Panc1 (cell line): ENCODE measurements at regions of chr12 and their contacts with region 1.

Region 1: GRCh38 chr12:52774629-52775250 is 2.4 kb downstream of the KRT76 start:
- DNase-seq: no peak
- ATAC-seq: no peak
- H3K4me3 ChIP-seq: no peak overlapping the region
- H3K27ac ChIP-seq: no peak overlapping the region
- H3K4me1 ChIP-seq: no peaks in the 10 kb centered on the region
- H3K27me3 ChIP-seq: peaks cover 8% of the 10 kb centered on the region; the same call in 1 of the 2 replicates
- CTCF ChIP-seq: no peak

Region 2: DNA sequence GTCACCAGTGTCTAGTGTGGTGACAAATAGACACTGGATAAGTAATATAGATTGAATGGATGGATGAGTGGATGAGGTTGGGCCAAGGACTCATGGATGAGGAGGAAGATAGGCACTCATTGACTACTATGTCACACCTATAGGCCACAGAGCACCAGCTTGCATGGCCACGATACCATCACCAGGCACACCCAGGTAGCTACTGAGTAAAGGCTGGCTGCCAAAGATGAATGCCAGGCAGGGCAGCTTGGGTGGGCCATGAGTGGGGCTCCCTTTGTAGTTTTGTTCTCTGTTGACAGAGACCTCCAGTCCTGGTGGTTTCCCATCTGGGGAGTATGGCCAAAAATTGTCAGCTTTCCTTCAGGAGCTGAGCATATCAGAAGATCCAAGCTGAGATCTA is 442.4 kb before region 1 on chr12:
- CTCF ChIA-PET with region 1: no interaction called
- POLR2A ChIA-PET with region 1: interaction called, 11 read pairs
- in situ Hi-C with region 1: no loop called
- intact Hi-C with region 1: no loop called
- DNase-seq: no peak
- ATAC-seq: no peak
- H3K4me3 ChIP-seq: no peak overlapping the region
- H3K27ac ChIP-seq: no peak overlapping the region
- H3K4me1 ChIP-seq: peaks cover under 1% of the 10 kb centered on the region; the same call in 1 of the 2 replicates
- H3K27me3 ChIP-seq: no peaks in the 10 kb centered on the region
- CTCF ChIP-seq: no peak

Region 3: GRCh38 chr12:52847335-52848102 is 72.8 kb after region 1 on chr12:
- CTCF ChIA-PET with region 1: no interaction called
- POLR2A ChIA-PET with region 1: no interaction called
- in situ Hi-C with region 1: no loop called
- intact Hi-C with region 1: no loop called
- DNase-seq: no peak
- ATAC-seq: 0 out of 2 replicates have a peak, but pooled peaks have one; percentile 26
- H3K4me3 ChIP-seq: no peak overlapping the region
- H3K27ac ChIP-seq: no peak overlapping the region
- H3K4me1 ChIP-seq: no peaks in the 10 kb centered on the region
- H3K27me3 ChIP-seq: no peaks in the 10 kb centered on the region
- CTCF ChIP-seq: no peak

Region 4: GRCh38 chr12:52942066-52942900 is 167.5 kb after region 1 on chr12:
- CTCF ChIA-PET with region 1: no interaction called
- POLR2A ChIA-PET with region 1: no interaction called
- in situ Hi-C with region 1: no loop called
- intact Hi-C with region 1: no loop called
- DNase-seq: no peak
- ATAC-seq: no peak
- H3K4me3 ChIP-seq: no peak overlapping the region
- H3K27ac ChIP-seq: peak overlapping the region; percentile 98
- H3K4me1 ChIP-seq: peaks cover 44% of the 10 kb centered on the region
- H3K27me3 ChIP-seq: no peaks in the 10 kb centered on the region
- CTCF ChIP-seq: no peak

Region 5: DNA sequence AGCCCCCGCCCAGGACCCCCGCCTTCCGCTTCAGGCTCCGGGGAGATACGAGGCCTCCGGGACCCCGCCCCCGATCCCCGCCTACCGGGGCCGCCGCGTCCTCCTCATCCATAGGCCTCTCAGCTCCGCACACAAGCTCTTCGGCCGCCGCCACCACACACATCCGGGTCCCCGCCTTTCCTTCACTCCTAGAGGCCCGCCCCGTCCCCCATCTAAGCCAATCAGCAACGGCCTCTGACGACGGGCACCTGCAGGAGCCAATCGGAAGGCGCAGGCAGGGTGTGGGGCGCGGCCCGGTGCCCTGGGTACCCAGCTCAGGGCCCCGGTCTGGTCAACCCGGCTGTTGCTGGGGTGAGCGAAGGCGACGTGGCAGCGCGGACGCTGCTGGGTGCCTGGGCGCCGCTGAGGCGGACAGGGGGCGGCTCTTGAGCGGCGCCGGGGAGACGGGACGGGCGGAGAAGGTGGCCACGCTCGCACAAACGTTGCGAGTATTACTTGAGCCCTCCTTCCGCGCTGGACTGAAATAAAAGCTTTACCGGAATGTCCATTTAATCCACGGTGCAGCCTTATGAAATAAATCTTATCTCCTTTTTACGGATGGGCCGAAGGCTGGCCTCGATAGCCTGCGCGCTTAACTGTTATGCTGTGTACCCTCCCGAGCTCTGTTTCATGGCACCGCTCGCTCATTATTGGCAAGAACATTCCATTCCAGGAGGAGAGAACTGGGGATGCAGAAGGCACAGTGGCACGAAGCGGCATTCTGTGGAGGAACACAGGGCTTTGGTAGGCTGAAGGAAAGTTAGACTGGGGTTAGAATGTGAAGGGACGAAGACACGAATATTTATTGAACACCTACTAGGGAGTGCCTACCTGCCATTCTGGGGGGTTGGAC is 304.7 kb after region 1 on chr12 and contains the start of gene SPRYD3:
- CTCF ChIA-PET with region 1: no interaction called
- POLR2A ChIA-PET with region 1: no interaction called
- in situ Hi-C with region 1: no loop called
- intact Hi-C with region 1: no loop called
- DNase-seq: peak; percentile 78
- ATAC-seq: peak; percentile 99
- H3K4me3 ChIP-seq: peak within 1 kb of the TSS; percentile 67 to 89
- H3K27ac ChIP-seq: peak within 1 kb of the TSS; percentile 95
- H3K4me1 ChIP-seq: 0 out of 2 replicates have a peak, but pooled peaks cover 3% of the 10 kb centered on the region
- H3K27me3 ChIP-seq: no peaks in the 10 kb centered on the region
- CTCF ChIP-seq: no peak
- total RNA-seq, gene SPRYD3: 25.0 TPM